H1 (cell line): ENCODE measurements at regions of chr12 and their contacts with region 1.

Region 1: DNA sequence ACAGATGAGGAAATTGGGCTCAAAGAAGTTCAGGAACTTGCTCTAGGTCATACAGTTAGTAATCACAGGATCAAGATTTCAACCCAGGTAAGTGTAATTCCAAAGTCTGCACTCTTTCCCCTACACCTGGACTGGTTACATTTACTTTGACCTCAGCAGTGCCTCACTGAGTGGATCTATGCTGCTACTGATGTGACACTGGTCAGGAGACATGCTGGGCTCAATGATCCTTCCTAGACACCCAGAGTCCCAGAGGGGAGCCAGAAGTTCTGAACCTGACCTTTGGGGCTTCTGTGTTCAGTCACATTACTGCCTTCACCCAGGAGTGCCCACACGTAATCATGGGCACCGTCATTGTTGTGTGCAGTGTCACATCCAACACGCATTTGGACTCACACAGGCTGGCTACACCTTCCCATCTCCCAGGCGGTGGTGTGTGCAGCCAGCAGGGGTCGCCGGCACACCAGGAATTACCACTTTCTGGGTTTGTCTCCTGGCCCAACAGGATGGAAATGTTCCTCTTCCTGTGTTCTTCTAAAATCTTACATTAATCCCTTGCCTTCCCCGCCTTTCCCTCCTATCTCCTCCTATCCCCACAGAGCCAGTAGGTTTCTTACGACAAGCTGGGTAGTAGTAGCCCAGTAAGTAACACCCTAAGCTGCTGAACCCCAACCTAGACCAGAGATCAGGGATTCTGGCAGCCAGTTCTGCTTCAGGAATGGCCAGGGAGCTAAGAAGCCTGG is 25.6 kb downstream of the CALCOCO1 start:
- DNase-seq: peak in 1 of 2 experiments; percentile 91
- H3K4me3 ChIP-seq: no peak overlapping the region
- H3K27ac ChIP-seq: no peak overlapping the region
- H3K4me1 ChIP-seq: peaks cover 0 to 7% (median under 1%) of the 10 kb centered on the region in 4 experiments; a peak in 4 of 7 replicates
- H3K27me3 ChIP-seq: peaks cover 8 to 18% (median 16%) of the 10 kb centered on the region in 4 experiments
- CTCF ChIP-seq: peak; percentile 97 to 100 (median 98)
- EP300 ChIP-seq: no peak
- POLR2A ChIP-seq: no peak
- RAD21 ChIP-seq: peak; percentile 96 to 99

Region 2: DNA sequence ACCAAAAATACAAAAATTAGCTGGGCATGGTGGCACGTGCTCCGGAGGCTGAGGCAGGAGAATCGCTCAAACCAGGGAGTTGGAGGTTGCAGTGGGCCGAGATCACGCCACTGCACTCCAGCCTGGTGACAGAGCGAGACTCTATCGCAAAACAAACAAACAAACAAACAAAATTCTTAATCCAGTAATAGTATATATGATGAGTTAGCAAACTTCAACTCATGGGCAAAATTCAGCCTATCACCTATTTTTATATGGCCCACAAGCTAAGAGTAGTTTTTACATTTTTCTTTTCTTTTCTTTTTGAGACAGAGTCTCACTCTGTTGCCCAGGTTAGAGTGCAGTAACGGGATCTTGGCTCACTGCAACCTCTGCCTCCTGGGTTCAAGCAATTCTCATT is 90.4 kb before region 1 on chr12:
- CTCF ChIA-PET with region 1: no interaction called
- POLR2A ChIA-PET with region 1: no interaction called
- DNase-seq: no peak
- H3K4me3 ChIP-seq: no peak overlapping the region
- H3K27ac ChIP-seq: no peak overlapping the region
- H3K4me1 ChIP-seq: no peaks in the 10 kb centered on the region
- H3K27me3 ChIP-seq: no peaks in the 10 kb centered on the region
- CTCF ChIP-seq: no peak
- EP300 ChIP-seq: no peak
- POLR2A ChIP-seq: no peak
- RAD21 ChIP-seq: no peak

Region 3: GRCh38 chr12:53631721-53632120 is 70.0 kb before region 1 on chr12:
- CTCF ChIA-PET with region 1: no interaction called
- POLR2A ChIA-PET with region 1: no interaction called
- DNase-seq: no peak
- H3K4me3 ChIP-seq: no peak overlapping the region
- H3K27ac ChIP-seq: no peak overlapping the region
- H3K4me1 ChIP-seq: peaks cover 0 to 2% (median 1%) of the 10 kb centered on the region in 4 experiments; a peak in 2 of 7 replicates
- H3K27me3 ChIP-seq: no peaks in the 10 kb centered on the region
- CTCF ChIP-seq: no peak
- EP300 ChIP-seq: no peak
- POLR2A ChIP-seq: no peak
- RAD21 ChIP-seq: no peak

Region 4: DNA sequence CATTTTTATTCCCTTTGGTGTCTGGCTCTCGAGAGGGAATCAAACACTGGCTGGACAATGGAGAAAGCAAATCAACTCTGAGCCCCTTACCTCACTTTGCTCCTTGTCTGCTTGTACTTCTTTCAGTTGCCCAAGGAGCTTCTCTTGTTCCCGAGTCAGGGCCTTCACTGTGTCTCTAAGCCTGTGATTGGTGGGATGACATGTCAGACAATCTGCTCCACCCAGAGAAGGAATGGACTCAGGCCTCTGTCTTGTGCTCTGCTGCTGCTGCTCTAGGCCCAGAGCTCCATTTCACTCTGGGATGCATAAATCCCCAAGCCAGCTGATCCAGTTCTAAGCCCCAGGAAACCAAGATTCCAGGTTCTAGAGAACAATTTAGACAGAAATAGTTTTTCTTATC is 18.0 kb after region 1 on chr12:
- CTCF ChIA-PET with region 1: interaction called, 24 read pairs
- POLR2A ChIA-PET with region 1: interaction called, 3 read pairs
- DNase-seq: no peak
- H3K4me3 ChIP-seq: no peak overlapping the region
- H3K27ac ChIP-seq: no peak overlapping the region
- H3K4me1 ChIP-seq: no peaks in the 10 kb centered on the region; a peak in 1 of 7 replicates
- H3K27me3 ChIP-seq: no peaks in the 10 kb centered on the region
- CTCF ChIP-seq: no peak
- EP300 ChIP-seq: no peak
- POLR2A ChIP-seq: no peak
- RAD21 ChIP-seq: no peak

Region 5: DNA sequence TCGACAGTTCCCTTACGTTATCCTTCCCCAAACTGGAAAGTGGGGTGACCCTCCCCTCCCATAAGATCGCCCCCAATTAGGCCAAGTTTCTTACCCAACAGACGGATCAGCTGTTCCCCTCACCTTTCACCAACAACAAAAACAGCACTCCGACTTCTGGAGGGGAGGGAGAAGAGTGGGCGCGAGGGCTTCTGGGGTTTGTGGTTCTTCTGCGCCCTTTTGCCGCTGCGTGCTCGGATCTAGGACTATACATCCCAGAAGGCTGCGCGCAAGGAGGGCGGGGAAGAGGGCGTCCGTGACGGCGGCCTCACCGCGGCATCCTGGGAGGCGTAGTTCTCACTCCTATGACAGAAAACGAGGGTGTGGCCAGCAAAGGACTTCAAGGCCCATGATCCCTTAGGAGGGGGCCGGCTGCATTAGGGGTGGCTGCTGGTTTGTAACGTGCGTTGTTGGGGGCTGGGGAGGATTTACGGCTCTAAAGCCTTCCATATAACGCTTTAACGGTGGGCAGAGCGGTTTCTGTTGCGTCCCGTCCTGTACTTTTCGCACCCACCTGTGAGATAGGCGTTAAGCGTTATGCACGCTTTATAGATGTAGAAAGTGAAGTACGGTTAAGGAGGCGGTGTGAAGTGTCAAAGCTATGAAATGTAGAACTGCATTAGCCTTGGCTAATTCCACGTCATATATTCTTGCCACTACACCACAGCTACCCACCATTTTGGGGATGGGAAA is 25.8 kb after region 1 on chr12 and contains the start of gene CALCOCO1:
- CTCF ChIA-PET with region 1: interaction called, 531 read pairs
- POLR2A ChIA-PET with region 1: interaction called, 5 read pairs
- DNase-seq: peak; percentile 90
- H3K4me3 ChIP-seq: peak within 1 kb of the TSS; percentile 71 to 94 (median 82)
- H3K27ac ChIP-seq: no peak within 1 kb of the TSS
- H3K4me1 ChIP-seq: peaks cover 0 to 11% (median 1%) of the 10 kb centered on the region in 4 experiments; a peak in 5 of 7 replicates
- H3K27me3 ChIP-seq: peaks cover 0 to 3% (median 0%) of the 10 kb centered on the region in 4 experiments; a peak in 1 of 7 replicates
- CTCF ChIP-seq: no peak
- EP300 ChIP-seq: no peak
- POLR2A ChIP-seq: no peak
- RAD21 ChIP-seq: no peak
- total RNA-seq, gene CALCOCO1: 18.7 and 20.3 TPM in 2 replicates

Region 6: GRCh38 chr12:53738406-53739213 is 36.9 kb after region 1 on chr12:
- CTCF ChIA-PET with region 1: interaction called, 531 read pairs
- POLR2A ChIA-PET with region 1: interaction called, 4 read pairs
- DNase-seq: peak in 1 of 2 experiments; percentile 92
- H3K4me3 ChIP-seq: peak overlapping the region; percentile 58 to 74 (median 65)
- H3K27ac ChIP-seq: no peak overlapping the region
- H3K4me1 ChIP-seq: peaks cover 0 to 13% (median 7%) of the 10 kb centered on the region in 4 experiments; a peak in 5 of 7 replicates
- H3K27me3 ChIP-seq: peaks cover 30 to 67% (median 54%) of the 10 kb centered on the region in 4 experiments
- CTCF ChIP-seq: no peak
- EP300 ChIP-seq: no peak
- POLR2A ChIP-seq: no peak
- RAD21 ChIP-seq: no peak

Region 7: DNA sequence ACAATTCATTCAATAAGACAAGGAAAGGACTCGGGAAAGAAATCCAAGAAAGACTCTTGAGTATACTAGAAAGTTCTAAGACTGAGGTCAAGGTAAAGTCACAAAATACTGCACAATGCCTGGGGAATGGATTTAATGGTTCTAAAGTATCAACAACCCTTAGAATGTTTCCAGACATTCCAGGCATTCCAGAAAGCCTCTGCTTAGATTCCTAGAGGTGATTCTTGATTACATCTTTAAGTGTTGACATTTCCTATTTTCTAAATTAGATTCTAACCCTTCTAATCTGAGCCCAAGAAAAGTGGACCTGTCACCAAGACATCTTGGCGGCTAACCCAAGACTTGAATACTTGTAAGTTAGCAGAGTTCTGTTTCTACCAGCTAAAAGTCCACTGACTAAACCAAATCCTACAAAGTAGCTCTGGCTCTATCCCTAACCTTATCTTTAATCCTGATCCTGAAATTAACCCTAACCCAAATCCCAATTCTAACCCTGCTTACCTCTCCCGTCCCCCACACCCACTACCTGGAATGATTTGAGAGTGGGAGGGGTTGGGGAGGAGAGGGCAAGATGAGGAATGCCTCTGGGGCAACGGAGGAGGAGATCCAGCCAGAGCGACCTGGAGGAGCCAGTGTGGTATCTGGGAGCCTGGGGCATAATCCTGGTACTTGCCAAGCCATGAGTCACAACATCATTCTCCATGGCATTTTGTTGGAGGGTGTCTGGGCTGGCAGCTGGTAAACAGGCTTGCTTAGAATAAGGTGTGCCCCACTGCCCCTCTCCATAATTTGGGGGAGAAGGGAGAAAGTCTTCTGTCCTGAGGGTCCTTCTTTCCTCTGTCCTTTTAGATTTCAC is 143.5 kb after region 1 on chr12:
- CTCF ChIA-PET with region 1: no interaction called
- POLR2A ChIA-PET with region 1: no interaction called
- DNase-seq: no peak
- H3K4me3 ChIP-seq: no peak overlapping the region
- H3K27ac ChIP-seq: no peak overlapping the region
- H3K4me1 ChIP-seq: peaks cover 0 to 3% (median 0%) of the 10 kb centered on the region in 4 experiments; a peak in 1 of 7 replicates
- H3K27me3 ChIP-seq: peaks cover 0 to 3% (median 0%) of the 10 kb centered on the region in 4 experiments; a peak in 1 of 7 replicates
- CTCF ChIP-seq: no peak
- EP300 ChIP-seq: no peak
- POLR2A ChIP-seq: no peak
- RAD21 ChIP-seq: no peak